Activated CD4-positive, alpha-beta memory T cell treated with anti-CD3 and anti-CD28 coated beads, Interleukin-2, amount 10 ng/mL, durations not matched to agents 7 days and 5 days (primary cell): ENCODE measurements at regions of chr1 and their contacts with region 1.

Region 1: DNA sequence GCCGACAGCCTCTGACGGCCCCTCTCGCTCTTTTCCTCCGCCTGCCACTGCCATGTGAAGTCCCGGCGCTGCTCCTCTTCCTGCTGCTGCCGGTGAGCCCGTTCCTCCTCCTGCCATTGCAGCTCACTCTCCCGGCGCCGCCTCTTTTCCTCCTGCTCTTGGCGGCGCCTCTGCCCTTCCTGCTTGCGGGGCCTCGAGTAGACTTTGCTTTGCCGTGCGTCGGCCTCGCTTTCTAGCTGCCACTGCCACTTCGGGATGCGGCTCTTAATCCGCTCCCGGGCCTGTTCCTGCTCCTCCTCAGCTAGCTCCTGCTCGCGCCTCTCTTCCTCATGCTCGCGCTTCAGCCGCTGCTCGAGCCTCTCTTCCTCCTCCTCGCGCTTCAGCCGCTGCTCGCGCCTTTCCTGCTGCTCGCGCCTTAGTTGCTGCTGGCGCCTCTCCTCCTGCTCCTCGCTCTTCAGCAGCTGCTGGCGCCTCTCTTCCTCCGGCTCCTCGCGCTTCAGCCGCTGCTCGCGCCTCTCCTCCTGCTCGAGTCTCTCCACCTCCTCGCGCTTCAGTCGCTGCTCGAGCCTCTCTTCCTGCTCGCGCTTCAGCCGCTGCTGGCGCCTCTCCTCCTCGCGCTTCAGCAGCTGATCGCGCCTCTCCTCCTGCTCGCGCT is 4.3 kb downstream of the TCHH start:
- DNase-seq: peak; percentile 45
- H3K4me3 Mint-ChIP-seq: no peak overlapping the region
- H3K27ac Mint-ChIP-seq: no peak overlapping the region
- H3K4me1 Mint-ChIP-seq: peaks cover 7% of the 10 kb centered on the region
- H3K27me3 Mint-ChIP-seq: peaks cover 8% of the 10 kb centered on the region

Region 2: GRCh38 chr1:151976858-151977257 is 134.1 kb before region 1 on chr1:
- CTCF ChIA-PET with region 1: no interaction called
- POLR2A ChIA-PET with region 1: no interaction called
- DNase-seq: no peak
- H3K4me3 Mint-ChIP-seq: no peak overlapping the region
- H3K27ac Mint-ChIP-seq: no peak overlapping the region
- H3K4me1 Mint-ChIP-seq: peaks cover 24% of the 10 kb centered on the region
- H3K27me3 Mint-ChIP-seq: peaks cover 9% of the 10 kb centered on the region

Region 3: DNA sequence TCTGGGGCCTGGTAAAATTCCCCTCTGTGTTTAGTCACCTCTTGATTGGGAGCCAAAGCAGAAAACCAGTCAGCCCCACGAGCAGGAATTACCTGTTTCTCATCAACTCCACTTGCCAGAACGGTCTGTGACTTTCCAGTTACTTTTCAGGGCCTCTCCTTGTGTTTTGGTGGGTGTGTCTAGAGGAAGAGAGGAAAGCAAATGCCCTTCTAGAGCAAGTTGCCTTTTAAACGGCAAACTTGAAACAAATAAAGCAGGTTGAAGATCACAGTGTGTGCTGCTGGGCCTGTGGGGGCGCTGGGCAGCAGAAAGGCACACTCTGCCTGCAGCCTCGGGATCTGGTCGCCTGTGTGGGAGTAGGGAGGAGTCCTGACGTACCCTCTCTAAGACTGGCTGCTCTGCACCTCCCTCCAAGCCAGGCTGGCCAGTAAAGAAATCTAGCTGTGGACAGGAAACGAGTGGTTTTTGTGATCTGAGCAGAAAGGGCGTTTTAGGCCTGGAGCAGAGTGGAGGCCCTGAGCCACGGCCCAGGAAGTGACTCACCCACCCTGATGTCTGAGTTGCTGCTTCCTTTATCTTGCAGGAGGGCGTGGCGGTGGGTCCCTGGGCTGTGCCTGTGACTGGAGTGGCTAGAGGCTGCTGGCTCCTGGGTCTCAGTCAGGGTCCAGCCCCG is 63.1 kb before region 1 on chr1:
- CTCF ChIA-PET with region 1: interaction called, 10 read pairs
- POLR2A ChIA-PET with region 1: no interaction called
- DNase-seq: peak; percentile 93
- H3K4me3 Mint-ChIP-seq: peak overlapping the region; percentile 73
- H3K27ac Mint-ChIP-seq: peak overlapping the region; percentile 97
- H3K4me1 Mint-ChIP-seq: peaks cover 55% of the 10 kb centered on the region
- H3K27me3 Mint-ChIP-seq: peaks cover 4% of the 10 kb centered on the region

Region 4: DNA sequence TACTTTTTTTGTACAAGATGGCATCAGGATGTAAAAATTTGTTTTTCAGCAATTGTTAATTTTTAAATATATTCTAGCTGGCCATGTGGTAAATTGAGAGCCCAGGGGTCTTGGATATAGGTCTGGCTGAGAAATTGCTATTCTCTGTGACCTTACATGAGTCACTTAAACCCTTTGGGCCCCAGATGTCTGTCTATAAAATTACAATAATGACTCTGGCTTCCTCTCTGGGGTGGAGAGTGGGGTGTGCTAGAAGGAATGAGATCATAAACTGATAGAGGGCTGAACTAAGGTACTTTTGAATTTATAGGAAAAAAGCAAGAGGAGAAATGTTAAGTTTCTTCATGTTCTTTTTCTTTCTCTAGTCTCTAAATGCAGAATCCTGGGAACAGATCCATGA is 16.7 kb after region 1 on chr1:
- CTCF ChIA-PET with region 1: no interaction called
- POLR2A ChIA-PET with region 1: no interaction called
- DNase-seq: no peak
- H3K4me3 Mint-ChIP-seq: no peak overlapping the region
- H3K27ac Mint-ChIP-seq: no peak overlapping the region
- H3K4me1 Mint-ChIP-seq: no peaks in the 10 kb centered on the region
- H3K27me3 Mint-ChIP-seq: peaks cover 58% of the 10 kb centered on the region